ENCODE measurements at regions of chr19 and their contacts with region 1.

Region 1: DNA sequence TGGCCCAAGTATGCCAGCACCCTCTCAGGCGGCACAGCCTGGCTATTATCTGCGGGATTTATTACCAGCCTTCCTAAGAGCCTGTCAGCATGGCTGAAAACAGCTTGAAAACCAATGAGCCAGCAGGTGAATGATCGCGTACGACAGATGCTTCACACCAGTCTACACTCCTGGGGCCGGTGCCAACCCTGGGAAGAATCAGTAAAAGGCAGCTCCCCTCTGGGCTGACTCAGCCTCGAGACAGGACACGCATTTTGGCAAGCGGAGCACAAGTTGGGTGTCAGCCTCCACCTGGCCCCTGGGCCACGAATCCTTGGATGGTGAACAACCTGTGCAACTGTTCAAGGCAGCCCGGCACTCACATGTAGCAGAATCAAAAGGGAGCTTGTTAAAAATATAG is 15.6 kb downstream of the EMP3 start:
- DNase-seq: no peak
- H3K4me3 ChIP-seq: no peak overlapping the region
- H3K27ac ChIP-seq: no peak overlapping the region
- H3K27me3 ChIP-seq: no peaks in the 10 kb centered on the region
- CTCF ChIP-seq: no peak

Region 2: GRCh38 chr19:48321622-48322591 is 19.1 kb before region 1 on chr19:
- CTCF ChIA-PET with region 1: no interaction called
- POLR2A ChIA-PET with region 1: no interaction called
- DNase-seq: peak; percentile 97
- H3K4me3 ChIP-seq: peak overlapping the region; percentile 63
- H3K27ac ChIP-seq: peak overlapping the region; percentile 98
- H3K27me3 ChIP-seq: no peaks in the 10 kb centered on the region
- CTCF ChIP-seq: no peak

Region 3: DNA sequence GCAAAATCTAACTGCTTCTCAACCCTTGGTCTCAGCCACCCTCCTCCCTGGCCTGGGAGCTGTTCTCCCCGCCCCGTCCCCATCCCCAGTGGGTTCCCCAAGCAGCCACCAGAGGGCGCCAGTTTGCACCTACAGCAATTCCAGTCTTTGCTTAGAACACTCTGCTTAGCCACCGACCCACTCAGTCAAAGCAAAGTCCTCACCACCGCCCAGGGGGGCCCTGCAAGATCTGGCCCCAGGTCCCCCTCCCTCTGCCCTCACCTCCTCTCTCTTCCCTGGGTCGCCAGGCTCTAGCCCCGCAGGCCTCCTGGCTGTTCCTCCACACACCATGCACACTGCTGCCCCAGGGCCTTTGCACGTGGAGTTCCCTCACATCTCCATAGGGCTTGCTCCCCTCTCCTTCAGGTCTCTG is 10.4 kb after region 1 on chr19:
- CTCF ChIA-PET with region 1: interaction called, 10 read pairs
- POLR2A ChIA-PET with region 1: no interaction called
- DNase-seq: no peak
- H3K4me3 ChIP-seq: no peak overlapping the region
- H3K27ac ChIP-seq: no peak overlapping the region
- H3K27me3 ChIP-seq: no peaks in the 10 kb centered on the region
- CTCF ChIP-seq: peak; percentile 69

Measured in AG04450 (cell line).